ENCODE measurements at regions of chr6 and their contacts with region 1.

Region 1: DNA sequence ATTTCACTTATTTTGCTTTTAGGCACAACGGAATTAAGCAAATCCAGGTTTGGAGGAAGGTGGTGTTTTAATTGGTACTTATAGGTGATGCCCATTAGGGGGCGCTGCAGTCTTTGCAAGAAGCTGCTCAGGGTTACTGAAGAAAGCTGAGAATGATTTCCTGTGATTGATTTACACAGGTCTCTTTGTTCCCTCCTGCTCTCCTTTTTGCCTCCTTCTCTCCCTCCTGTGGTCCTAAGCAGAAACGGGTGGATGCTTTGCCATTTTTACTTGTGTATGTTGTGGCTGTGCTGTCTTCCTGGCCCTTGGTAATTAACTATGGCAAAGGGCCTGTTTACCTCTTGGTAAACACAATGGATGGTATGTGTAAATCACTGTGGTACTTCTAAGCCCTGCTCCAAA is 97.8 kb downstream of the ANKS1A start:
- DNase-seq: no peak
- H3K4me3 ChIP-seq: no peak overlapping the region
- H3K27me3 ChIP-seq: no peaks in the 10 kb centered on the region
- CTCF ChIP-seq: peak; percentile 71

Region 2: DNA sequence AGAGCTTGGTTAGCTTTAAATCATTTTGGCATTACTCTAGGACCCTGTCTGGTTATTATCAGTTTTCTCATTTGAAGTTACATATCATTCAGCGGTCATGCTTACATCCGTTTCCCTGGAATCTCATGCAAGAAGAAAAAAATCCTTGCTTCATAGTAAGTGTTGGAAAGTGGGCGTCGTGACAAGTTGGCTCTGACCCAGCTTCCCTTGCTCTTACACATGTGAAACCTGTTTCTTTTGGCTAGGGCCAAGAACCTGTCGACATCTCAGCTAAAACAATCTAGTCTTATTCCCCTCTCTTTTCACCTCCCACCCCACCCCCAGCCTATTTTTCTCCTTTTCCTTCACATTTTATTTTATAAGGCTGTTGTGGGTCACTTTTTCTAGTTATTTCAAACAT is 52.3 kb before region 1 on chr6:
- CTCF ChIA-PET with region 1: no interaction called
- POLR2A ChIA-PET with region 1: no interaction called
- DNase-seq: no peak
- H3K4me3 ChIP-seq: no peak overlapping the region
- H3K27me3 ChIP-seq: no peaks in the 10 kb centered on the region
- CTCF ChIP-seq: no peak

Region 3: GRCh38 chr6:34973547-34974248 is 13.1 kb before region 1 on chr6:
- CTCF ChIA-PET with region 1: interaction called, 21 read pairs
- POLR2A ChIA-PET with region 1: no interaction called
- DNase-seq: no peak
- H3K4me3 ChIP-seq: no peak overlapping the region
- H3K27me3 ChIP-seq: no peaks in the 10 kb centered on the region
- CTCF ChIP-seq: no peak; the same call in 1 of the 2 replicates

Region 4: DNA sequence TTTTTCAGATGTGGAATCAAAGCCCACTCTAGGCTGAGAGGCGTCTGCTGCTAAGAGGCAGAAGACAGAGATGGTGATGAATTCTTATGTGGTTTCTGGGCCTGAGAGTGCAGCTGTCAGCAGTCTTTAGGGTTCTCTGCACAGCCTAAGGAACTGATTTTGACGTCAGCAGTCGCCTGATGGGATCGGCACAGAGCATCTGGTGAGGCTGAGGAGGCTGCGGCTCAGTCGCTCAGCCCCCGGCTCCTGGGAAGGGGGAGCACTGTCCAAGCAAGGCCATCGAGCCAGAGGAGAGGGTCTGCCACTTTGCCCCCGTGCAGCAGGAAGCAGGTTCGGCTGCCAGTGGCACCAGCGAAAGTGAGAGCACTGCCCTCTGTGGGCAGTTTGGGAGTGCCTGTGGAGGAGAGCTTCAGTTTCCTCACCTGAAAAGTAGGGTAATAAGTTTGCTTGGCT is 61.8 kb after region 1 on chr6:
- CTCF ChIA-PET with region 1: interaction called, 19 read pairs
- POLR2A ChIA-PET with region 1: no interaction called
- DNase-seq: no peak
- H3K4me3 ChIP-seq: no peak overlapping the region
- H3K27me3 ChIP-seq: no peaks in the 10 kb centered on the region
- CTCF ChIP-seq: peak; percentile 56

Region 5: DNA sequence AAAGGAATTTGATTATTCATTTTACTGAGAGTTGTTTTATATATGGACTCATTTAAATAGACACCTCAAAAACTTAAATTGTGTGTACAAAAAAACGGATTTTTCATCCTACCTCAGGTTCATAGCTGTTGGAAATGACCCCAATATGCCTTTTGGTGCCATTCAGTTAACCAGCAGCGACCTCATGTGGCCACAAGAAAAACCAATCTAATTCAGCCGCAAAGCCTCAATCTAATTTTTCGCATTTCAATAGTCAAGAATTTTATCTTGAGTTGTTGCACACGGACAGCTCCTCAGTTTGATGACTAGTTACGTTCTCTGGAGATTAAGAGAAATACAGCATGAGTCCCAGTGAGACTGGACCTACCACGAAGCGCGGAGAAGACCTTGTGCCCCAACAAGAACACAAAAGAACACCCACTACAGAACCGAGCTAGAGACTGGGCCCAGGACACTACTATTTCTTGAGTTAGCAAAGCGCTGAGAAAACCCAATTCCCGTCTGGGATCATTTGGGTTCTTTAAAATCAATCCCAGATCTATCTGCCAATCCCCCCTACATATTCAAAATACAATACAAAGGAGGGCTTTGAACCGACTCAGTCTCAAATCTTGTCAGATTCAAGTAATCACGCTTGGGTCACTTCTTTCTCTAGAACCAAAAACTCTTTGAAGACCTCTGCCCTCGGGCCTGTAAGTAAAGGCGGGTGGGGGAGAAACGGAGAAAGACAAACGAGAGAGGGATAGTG is 153.2 kb after region 1 on chr6:
- CTCF ChIA-PET with region 1: interaction called, 103 read pairs
- POLR2A ChIA-PET with region 1: no interaction called
- DNase-seq: no peak
- H3K4me3 ChIP-seq: no peak overlapping the region
- H3K27me3 ChIP-seq: no peaks in the 10 kb centered on the region
- CTCF ChIP-seq: peak; percentile 74

Region 6: GRCh38 chr6:35146453-35146852 is 159.6 kb after region 1 on chr6:
- CTCF ChIA-PET with region 1: interaction called, 20 read pairs
- POLR2A ChIA-PET with region 1: no interaction called
- DNase-seq: no peak
- H3K4me3 ChIP-seq: no peak overlapping the region
- H3K27me3 ChIP-seq: no peaks in the 10 kb centered on the region
- CTCF ChIP-seq: peak; percentile 74